Breast epithelium (tissue), 4 donors: ENCODE measurements at regions of chr2 and their contacts with region 1.

Region 1: DNA sequence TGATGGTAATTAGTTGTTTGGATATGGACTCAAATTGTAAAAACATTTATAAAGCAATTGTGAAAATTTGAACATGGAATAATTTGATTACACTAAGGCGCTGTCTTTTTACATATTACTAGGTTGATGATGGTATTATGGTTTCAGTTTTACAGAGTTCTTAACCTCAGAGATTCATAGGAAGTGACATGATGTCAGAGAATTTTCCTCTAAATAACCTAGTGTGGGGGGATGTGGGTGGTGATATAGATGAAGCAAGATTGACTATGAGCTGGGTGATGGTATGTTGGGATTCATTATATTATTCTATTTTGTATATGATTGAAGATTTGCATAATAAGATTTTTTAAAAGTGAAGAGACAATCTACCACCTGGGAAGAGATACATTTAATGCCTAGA is 45.9 kb upstream of the ATP5MC3 start:
- DNase-seq: no peak
- H3K4me3 ChIP-seq: no peak overlapping the region
- H3K27ac ChIP-seq: no peak overlapping the region
- H3K4me1 ChIP-seq: no peaks in the 10 kb centered on the region
- H3K27me3 ChIP-seq: peaks cover 0 to 4% of the 10 kb centered on the region in 2 donors
- CTCF ChIP-seq: no peak
- POLR2A ChIP-seq: no peak

Region 2: GRCh38 chr2:175256889-175257585 is 29.6 kb after region 1 on chr2:
- intact Hi-C with region 1: loop called (anchors 2 kb)
- DNase-seq: no peak
- H3K4me3 ChIP-seq: no peak overlapping the region
- H3K27ac ChIP-seq: no peak overlapping the region
- H3K4me1 ChIP-seq: no peaks in the 10 kb centered on the region
- H3K27me3 ChIP-seq: peaks cover 0 to 9% of the 10 kb centered on the region in 2 donors
- CTCF ChIP-seq: no peak
- POLR2A ChIP-seq: no peak